H1 (cell line): ENCODE measurements at regions of chr7 and their contacts with region 1.

Region 1: DNA sequence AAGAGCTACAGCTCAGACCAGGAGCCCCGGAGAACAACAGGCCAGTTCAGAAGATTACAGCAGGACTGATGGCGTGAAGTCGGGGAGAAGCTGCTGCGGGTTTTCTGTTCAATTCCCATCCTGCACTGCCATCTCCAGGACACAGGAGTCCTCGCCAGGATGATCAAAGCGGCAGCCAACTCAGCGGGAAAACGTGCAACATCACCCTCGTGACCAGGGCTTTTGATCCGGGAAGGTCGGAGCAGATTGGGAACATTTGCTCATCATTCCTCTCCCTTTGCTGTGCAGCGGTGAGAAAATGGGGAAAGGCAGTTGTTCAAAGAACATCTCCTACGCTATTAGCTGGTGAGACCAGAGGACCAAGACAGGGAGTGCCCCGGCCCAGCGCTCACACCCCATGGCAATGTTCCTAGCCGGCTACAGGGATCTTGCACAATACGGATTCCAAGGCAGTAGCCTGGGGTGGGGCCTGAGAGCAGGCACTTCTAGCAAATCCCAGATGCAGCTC is 50.4 kb upstream of the FOXK1 start:
- DNase-seq: peak; percentile 52 to 57
- H3K4me3 ChIP-seq: peak overlapping the region in 1 of 4 experiments; percentile 44; a peak in 3 of 8 replicates
- H3K27ac ChIP-seq: no peak overlapping the region
- H3K4me1 ChIP-seq: no peaks in the 10 kb centered on the region; a peak in 2 of 7 replicates
- H3K27me3 ChIP-seq: peaks cover 0 to 10% (median 2%) of the 10 kb centered on the region in 4 experiments; a peak in 4 of 7 replicates
- CTCF ChIP-seq: peak; percentile 50 to 67 (median 50)
- EP300 ChIP-seq: no peak
- POLR2A ChIP-seq: no peak
- RAD21 ChIP-seq: peak; percentile 78 to 79

Region 2: DNA sequence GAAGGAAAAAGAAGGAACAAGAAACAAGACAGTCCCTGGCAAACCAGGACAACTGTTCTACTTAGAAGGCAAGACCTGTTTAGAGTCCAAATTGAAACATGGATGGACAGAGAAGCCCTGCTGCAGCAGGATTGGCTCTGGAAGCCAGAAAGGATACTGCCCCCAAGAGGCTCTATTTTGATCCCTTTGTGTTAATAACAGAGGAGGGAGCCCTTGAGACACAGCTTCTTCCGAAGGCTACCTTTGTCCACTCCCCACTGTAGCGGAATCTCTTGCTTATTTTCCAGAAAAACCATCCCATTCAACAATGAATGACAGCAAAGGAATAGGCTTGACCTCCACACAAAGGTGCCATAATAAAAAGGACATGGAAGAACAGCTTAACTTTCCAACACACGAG is 69.9 kb before region 1 on chr7:
- CTCF ChIA-PET with region 1: interaction called, 17 read pairs
- POLR2A ChIA-PET with region 1: no interaction called
- DNase-seq: no peak
- H3K4me3 ChIP-seq: no peak overlapping the region
- H3K27ac ChIP-seq: no peak overlapping the region
- H3K4me1 ChIP-seq: peaks cover 0 to 3% (median 0%) of the 10 kb centered on the region in 4 experiments; a peak in 1 of 7 replicates
- H3K27me3 ChIP-seq: no peaks in the 10 kb centered on the region
- CTCF ChIP-seq: peak in 2 of 3 experiments; percentile 28 to 54; a peak in 3 of 4 replicates
- EP300 ChIP-seq: no peak
- POLR2A ChIP-seq: no peak
- RAD21 ChIP-seq: peak; percentile 26 to 28; a peak in 3 of 4 replicates

Region 3: DNA sequence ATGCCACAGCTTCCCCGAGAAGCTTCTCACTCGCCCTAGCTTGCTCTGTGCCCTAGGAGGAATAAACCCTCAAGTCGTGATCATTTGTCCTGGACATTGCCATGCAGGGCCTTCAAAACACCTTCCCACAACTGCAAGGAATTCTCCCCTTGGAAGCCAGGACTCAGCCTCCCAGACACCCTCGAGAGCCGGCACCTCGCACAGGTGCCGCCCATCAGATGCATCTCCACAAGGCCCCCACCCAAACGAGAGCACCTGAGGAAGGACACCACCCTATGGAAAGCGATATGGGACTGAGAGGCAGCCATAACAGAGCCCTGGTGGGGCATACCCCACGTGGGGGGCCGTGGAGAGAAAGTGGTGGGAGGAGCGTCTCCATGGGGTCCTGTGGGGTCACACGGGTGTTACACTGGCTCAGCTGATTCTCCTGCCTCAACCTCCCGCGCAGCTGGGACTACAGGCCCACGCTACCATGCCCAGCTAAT is 27.2 kb before region 1 on chr7:
- CTCF ChIA-PET with region 1: interaction called, 32 read pairs
- POLR2A ChIA-PET with region 1: no interaction called
- DNase-seq: no peak
- H3K4me3 ChIP-seq: no peak overlapping the region
- H3K27ac ChIP-seq: no peak overlapping the region
- H3K4me1 ChIP-seq: no peaks in the 10 kb centered on the region
- H3K27me3 ChIP-seq: no peaks in the 10 kb centered on the region
- CTCF ChIP-seq: no peak
- EP300 ChIP-seq: no peak
- POLR2A ChIP-seq: no peak
- RAD21 ChIP-seq: no peak

Region 4: GRCh38 chr7:4610768-4611467 is 20.8 kb before region 1 on chr7:
- CTCF ChIA-PET with region 1: interaction called, 32 read pairs
- POLR2A ChIA-PET with region 1: interaction called, 3 read pairs
- DNase-seq: peak in 1 of 2 experiments; percentile 51
- H3K4me3 ChIP-seq: no peak overlapping the region
- H3K27ac ChIP-seq: no peak overlapping the region
- H3K4me1 ChIP-seq: peaks cover 0 to 10% (median under 1%) of the 10 kb centered on the region in 4 experiments; a peak in 4 of 7 replicates
- H3K27me3 ChIP-seq: no peaks in the 10 kb centered on the region; a peak in 1 of 7 replicates
- CTCF ChIP-seq: peak in 2 of 3 experiments; percentile 68 to 73; a peak in 3 of 4 replicates
- EP300 ChIP-seq: no peak
- POLR2A ChIP-seq: no peak
- RAD21 ChIP-seq: peak; percentile 86 to 88